ENCODE measurements at regions of chr5 and their contacts with region 1.

Region 1: DNA sequence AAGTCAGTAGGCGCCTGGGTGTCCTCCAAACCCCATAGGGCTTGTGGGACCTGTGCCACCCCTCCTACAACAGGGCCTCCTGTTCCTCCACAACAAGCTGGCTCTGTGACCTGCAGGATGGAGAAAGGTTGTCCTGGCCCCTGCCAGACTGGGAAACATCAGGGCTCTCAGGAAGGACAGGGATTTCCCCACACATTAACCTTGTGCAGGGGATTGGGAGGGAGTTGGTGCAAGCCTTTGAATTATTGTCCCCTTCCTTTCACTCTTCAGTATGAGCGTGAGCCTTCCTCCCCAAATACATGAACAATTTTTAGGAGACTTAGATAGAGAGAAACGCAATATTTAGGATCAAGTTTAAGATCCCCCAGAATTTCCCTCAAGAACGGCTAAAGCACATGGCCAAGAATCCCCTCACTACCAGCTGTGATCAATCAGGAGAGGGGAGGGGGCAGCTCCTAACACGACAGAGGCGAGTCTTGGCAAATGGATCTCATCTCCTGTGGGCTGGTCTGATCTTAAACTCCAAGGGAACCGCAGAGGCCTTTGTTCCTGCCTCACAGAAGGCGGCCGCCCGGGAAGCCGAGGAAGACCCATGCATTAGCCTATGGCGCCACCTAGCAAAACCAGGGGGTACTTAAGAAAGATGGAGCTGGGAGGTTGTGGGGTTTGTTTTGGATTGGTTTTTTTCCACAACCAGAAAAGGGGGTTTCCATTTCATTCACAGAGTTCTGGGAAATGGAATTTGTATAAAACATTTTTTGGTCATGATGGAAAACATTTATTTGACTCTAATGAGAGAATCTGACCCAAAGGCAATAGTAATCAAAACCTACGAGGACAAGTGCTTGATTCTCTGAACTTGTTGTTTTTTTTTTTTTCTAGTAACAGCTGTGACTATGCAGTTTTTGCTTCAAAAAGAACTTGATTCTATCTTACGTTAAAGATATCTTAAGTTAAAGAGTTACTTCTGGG is 36.1 kb upstream of the OSMR start:
- DNase-seq: peak; percentile 67 to 72
- ATAC-seq: peak; percentile 78 to 91
- H3K4me3 ChIP-seq: no peak overlapping the region
- H3K27ac ChIP-seq: peak overlapping the region; percentile 36 to 47 (median 44)
- H3K4me1 ChIP-seq: peaks cover 9 to 22% of the 10 kb centered on the region in 2 donors
- H3K27me3 ChIP-seq: no peaks in the 10 kb centered on the region
- CTCF ChIP-seq: peak; percentile 80 to 89 (median 81)
- POLR2A ChIP-seq: no peak

Region 2: DNA sequence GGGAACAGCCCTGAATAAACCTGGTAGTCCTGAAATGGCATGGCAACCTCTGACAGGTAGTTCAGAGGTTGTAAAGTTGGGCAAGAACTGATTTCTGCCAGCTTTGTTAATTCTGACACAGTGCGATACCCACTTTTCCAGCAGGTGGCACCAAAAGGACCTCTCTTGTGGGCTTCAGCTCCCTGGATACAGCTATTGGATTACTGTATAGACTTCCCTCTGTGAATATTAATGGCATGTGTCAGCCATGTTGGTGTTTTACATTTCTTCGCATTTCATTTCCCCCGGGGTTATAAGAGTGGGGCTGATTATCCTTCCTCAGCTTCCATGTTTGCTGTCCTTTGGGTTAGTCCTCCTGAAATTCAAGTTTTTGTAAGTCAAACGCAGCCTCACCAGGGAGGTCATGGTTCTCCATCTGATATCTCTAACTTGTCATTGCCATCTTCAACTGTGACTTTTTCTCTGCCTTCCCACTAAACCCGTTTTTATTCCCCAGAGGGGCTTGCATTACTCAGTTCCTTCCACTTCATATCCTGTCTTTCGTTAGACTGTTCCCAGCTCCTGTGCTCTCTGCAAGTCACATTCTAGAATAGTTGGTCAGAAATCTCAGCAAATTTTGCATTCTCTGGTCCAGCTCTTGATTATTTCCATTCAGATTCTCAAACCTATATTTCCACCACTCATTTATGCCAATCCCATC is 388.8 kb before region 1 on chr5:
- in situ Hi-C with region 1: no loop called
- intact Hi-C with region 1: loop called (anchors 2 kb)
- DNase-seq: peak; percentile 7 to 44
- ATAC-seq: peak; percentile 81 to 83
- H3K4me3 ChIP-seq: no peak overlapping the region
- H3K27ac ChIP-seq: no peak overlapping the region
- H3K4me1 ChIP-seq: no peaks in the 10 kb centered on the region
- H3K27me3 ChIP-seq: no peaks in the 10 kb centered on the region
- CTCF ChIP-seq: peak; percentile 49 to 75 (median 68)
- POLR2A ChIP-seq: no peak

Region 3: DNA sequence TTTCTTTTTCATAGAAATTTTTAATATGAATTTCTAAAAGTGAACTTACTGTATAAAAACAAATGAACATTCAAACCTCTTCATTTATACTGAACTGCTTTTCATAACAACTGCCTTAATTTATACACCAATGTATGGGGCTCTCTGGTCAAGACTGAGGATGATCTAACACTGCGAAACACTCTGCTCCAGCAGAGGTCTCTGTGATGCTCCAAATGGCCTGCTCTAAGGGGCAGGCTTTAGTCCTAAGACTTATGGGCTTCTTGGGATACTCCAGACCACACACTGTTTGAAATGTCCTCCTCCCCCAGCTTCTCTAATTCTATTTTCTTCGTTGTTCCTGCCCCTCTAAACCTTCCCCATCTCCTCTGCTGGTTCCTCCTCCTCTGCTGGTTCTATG is 311.7 kb before region 1 on chr5:
- in situ Hi-C with region 1: no loop called
- intact Hi-C with region 1: loop called (anchors 5 kb)
- DNase-seq: no peak
- ATAC-seq: peak in 1 of 2 donors; percentile 55
- H3K4me3 ChIP-seq: no peak overlapping the region
- H3K27ac ChIP-seq: no peak overlapping the region
- H3K4me1 ChIP-seq: no peaks in the 10 kb centered on the region
- H3K27me3 ChIP-seq: no peaks in the 10 kb centered on the region
- CTCF ChIP-seq: no peak
- POLR2A ChIP-seq: no peak

Region 4: GRCh38 chr5:38551030-38552017 is 258.4 kb before region 1 on chr5:
- in situ Hi-C with region 1: loop called in 1 of 4 experiments (anchors 10 kb)
- intact Hi-C with region 1: loop called (anchors 5 kb)
- DNase-seq: no peak
- ATAC-seq: peak in 1 of 2 donors; percentile 50
- H3K4me3 ChIP-seq: peak overlapping the region; percentile 0 to 91 (median 19)
- H3K27ac ChIP-seq: peak overlapping the region; percentile 16 to 99 (median 50)
- H3K4me1 ChIP-seq: peaks cover 57 to 77% of the 10 kb centered on the region in 2 donors
- H3K27me3 ChIP-seq: no peaks in the 10 kb centered on the region
- CTCF ChIP-seq: peak; percentile 56 to 64 (median 62)
- POLR2A ChIP-seq: no peak

Region 5: GRCh38 chr5:38680094-38680825 is 129.4 kb before region 1 on chr5:
- in situ Hi-C with region 1: no loop called
- intact Hi-C with region 1: no loop called
- DNase-seq: no peak
- ATAC-seq: no peak
- H3K4me3 ChIP-seq: no peak overlapping the region
- H3K27ac ChIP-seq: no peak overlapping the region
- H3K4me1 ChIP-seq: no peaks in the 10 kb centered on the region
- H3K27me3 ChIP-seq: no peaks in the 10 kb centered on the region
- CTCF ChIP-seq: no peak
- POLR2A ChIP-seq: no peak

Region 6: DNA sequence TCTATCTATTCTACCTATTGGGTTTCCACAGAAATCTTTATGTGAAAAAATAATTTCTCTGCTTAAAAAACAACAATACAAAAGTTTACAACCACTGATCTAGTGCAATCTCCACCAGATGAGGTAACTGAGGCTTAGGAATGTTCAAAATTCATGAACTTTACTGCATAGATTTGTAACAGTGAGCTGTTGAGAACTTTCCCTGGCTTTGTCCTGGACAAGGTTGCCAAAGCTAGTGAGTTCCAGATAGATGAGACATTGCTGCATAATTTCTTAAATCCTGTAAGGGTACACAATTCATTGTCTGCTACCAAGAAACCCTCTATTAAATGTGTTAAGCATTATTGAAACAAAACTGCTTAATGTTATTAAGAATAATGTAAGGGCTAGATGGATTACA is 138.8 kb after region 1 on chr5:
- in situ Hi-C with region 1: no loop called
- intact Hi-C with region 1: no loop called
- DNase-seq: no peak
- ATAC-seq: no peak
- H3K4me3 ChIP-seq: no peak overlapping the region
- H3K27ac ChIP-seq: no peak overlapping the region
- H3K4me1 ChIP-seq: no peaks in the 10 kb centered on the region
- H3K27me3 ChIP-seq: no peaks in the 10 kb centered on the region
- CTCF ChIP-seq: no peak
- POLR2A ChIP-seq: no peak